WTC11 (cell line): ENCODE measurements at regions of chr1 and their contacts with region 1.

Region 1: GRCh38 chr1:14435368-14436023 is 163.0 kb upstream of the KAZN start:
- DNase-seq: peak; percentile 72
- ATAC-seq: peak; percentile 97
- H3K4me3 Mint-ChIP-seq: no peak overlapping the region
- H3K27ac Mint-ChIP-seq: no peak overlapping the region
- H3K4me1 Mint-ChIP-seq: no peaks in the 10 kb centered on the region
- H3K27me3 Mint-ChIP-seq: peaks cover 11% of the 10 kb centered on the region
- CTCF ChIP-seq: peak; percentile 50

Region 2: DNA sequence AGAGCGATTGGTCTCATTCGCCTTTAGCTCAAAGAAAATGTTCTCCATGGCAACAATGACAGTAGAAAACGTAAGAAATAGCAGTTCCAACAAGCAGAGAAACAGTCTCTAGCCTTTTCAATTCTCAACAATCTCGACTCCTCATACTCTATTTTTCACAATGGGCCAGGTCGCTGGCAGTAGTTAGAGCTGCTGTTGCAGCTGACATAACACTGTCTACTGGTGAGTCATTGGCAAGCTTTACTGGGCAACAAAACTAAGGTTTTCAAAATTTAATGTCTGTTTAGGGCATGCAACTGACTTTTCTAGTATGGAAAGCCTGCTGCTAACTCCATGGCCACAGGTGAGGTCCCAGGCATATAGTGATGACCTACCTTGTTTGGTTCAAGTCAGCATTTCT is 58.1 kb before region 1 on chr1:
- CTCF ChIA-PET with region 1: no interaction called
- POLR2A ChIA-PET with region 1: no interaction called
- DNase-seq: no peak
- ATAC-seq: no peak
- H3K4me3 Mint-ChIP-seq: no peak overlapping the region
- H3K27ac Mint-ChIP-seq: no peak overlapping the region
- H3K4me1 Mint-ChIP-seq: peaks cover 18% of the 10 kb centered on the region
- H3K27me3 Mint-ChIP-seq: peaks cover 5% of the 10 kb centered on the region; the same call in 1 of the 2 replicates
- CTCF ChIP-seq: no peak

Region 3: DNA sequence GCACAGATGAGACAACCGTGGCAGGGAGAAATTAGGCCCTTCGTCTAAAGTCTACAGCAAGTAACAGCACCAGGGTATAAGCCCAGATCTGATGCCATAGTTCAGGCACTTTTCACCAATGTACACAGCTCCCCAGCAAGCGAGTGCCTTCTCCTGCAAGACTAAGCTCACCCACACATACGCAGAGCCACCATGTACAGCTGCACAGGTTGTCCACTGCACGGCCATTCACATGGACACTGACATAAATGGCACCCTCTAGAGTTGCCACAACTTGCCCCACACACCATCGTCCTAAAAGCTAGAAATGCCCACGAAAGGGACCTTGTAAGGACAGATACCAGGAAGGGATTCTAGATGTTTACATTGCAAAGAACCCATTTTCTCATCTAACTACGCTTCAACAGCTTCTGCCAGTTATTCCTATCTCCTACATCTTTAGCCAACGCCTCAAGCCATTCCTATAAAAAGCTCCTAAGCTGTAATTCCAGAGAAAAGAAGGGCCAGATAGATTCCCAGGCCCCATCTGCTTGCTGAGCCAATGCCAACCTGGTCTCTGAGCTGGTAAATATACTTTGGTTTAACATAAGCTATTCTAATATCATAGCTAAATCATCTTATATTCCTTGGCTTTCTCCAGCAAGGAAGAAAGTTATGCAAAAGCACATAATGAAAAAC is 11.0 kb before region 1 on chr1:
- CTCF ChIA-PET with region 1: interaction called, 20 read pairs
- POLR2A ChIA-PET with region 1: no interaction called
- DNase-seq: no peak
- ATAC-seq: no peak
- H3K4me3 Mint-ChIP-seq: no peak overlapping the region
- H3K27ac Mint-ChIP-seq: no peak overlapping the region
- H3K4me1 Mint-ChIP-seq: no peaks in the 10 kb centered on the region
- H3K27me3 Mint-ChIP-seq: peaks cover 17% of the 10 kb centered on the region
- CTCF ChIP-seq: no peak